ENCODE measurements at regions of chr14 and their contacts with region 1.

Region 1: DNA sequence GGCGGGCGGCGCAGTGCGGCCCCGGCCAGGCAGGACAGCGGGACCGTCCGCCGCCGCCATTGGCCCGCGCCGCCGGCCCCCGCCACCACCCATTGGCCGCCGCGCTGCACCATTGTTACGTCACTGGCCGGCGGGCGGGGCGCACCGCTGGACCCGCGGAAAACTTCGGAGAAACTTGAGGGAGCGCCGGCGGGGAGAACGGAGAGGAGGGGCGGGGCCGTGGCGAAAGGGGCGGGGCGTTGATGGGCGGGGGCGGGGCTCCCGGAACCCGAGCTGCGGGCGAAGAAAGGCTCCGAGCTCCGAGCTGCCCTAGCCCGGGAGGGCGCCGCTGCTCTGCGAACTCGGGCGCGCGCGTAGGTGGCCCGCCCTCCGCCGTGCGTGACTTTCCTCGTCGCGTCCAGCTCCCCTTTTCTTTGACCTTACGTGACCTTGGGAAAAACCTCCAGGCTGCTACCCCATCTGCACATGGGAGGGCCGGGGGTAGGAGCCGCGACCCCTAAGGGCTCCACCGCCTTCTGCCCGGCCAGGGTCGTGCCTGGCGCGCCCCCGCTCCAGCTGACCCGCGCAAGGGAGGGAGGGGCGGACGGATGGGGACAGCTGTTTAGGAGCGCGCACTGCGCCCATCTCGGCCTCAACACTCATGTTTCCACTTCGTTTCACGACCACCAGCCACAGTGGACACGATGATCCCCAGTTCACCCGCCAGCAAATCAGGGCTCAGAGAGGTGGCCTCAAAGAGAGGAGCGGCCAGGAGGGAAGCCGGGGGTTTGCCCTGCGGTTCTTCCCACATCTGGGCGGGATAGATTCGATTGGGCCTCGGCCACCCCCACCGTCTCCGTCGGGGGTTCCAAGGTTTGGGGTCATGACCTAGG is at the start of gene ANKRD9:
- DNase-seq: peak; percentile 95 to 98 (median 96)
- H3K4me3 ChIP-seq: peak within 1 kb of the TSS in 3 of 4 donors; percentile 62 to 74 (median 62)
- H3K27ac ChIP-seq: peak within 1 kb of the TSS; percentile 71 to 91 (median 73)
- H3K4me1 ChIP-seq: peaks cover 4 to 15% of the 10 kb centered on the region in 2 donors
- H3K27me3 ChIP-seq: no peaks in the 10 kb centered on the region
- CTCF ChIP-seq: no peak
- POLR2A ChIP-seq: peak in 1 of 2 donors; percentile 47
- total RNA-seq, gene ANKRD9: 21.4 to 105 (median 46.4) TPM

Region 2: GRCh38 chr14:102319351-102320032 is 190.5 kb before region 1 on chr14 and contains the start of gene ZNF839:
- intact Hi-C with region 1: loop called in 1 of 2 experiments (anchors 10 kb)
- DNase-seq: peak; percentile 93 to 97 (median 95)
- H3K4me3 ChIP-seq: peak within 1 kb of the TSS; percentile 17 to 82 (median 53)
- H3K27ac ChIP-seq: peak within 1 kb of the TSS; percentile 69 to 98 (median 92)
- H3K4me1 ChIP-seq: peaks cover 6 to 42% of the 10 kb centered on the region in 2 donors
- H3K27me3 ChIP-seq: no peaks in the 10 kb centered on the region
- CTCF ChIP-seq: peak in 1 of 6 experiments; percentile 2
- POLR2A ChIP-seq: peak; percentile 20 to 32
- total RNA-seq, gene ZNF839: 7.4 to 23.1 (median 14.1) TPM

Region 3: DNA sequence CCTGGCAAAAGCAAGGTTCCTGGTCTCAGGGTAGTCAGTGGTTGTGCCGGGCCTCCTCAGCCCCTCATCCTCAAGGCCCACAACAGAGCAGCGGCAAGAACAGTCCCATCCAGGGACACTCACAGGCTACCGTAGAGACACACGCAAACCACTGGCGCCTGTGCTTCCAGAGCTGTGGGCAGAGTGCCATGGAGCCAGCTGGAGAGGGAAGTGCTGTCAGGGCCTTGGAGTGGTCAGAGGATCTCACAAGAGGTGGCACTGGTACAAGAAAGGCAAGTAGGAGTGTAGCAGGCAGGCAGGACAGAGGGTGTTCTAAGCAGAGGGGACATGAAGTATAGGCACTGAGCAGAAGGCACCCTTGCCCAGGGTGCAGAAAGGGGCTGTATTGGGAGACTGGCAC is 35.0 kb before region 1 on chr14:
- intact Hi-C with region 1: loop called in 1 of 2 experiments (anchors 5 kb)
- DNase-seq: peak; percentile 75 to 94 (median 89)
- H3K4me3 ChIP-seq: no peak overlapping the region
- H3K27ac ChIP-seq: no peak overlapping the region
- H3K4me1 ChIP-seq: peaks cover 7 to 15% of the 10 kb centered on the region in 2 donors
- H3K27me3 ChIP-seq: no peaks in the 10 kb centered on the region
- CTCF ChIP-seq: no peak
- POLR2A ChIP-seq: no peak

Region 4: GRCh38 chr14:102908806-102909455 is 399.0 kb after region 1 on chr14:
- intact Hi-C with region 1: no loop called
- DNase-seq: no peak
- H3K4me3 ChIP-seq: no peak overlapping the region
- H3K27ac ChIP-seq: no peak overlapping the region
- H3K4me1 ChIP-seq: no peaks in the 10 kb centered on the region
- H3K27me3 ChIP-seq: no peaks in the 10 kb centered on the region
- CTCF ChIP-seq: no peak
- POLR2A ChIP-seq: no peak

Measured in adrenal gland (tissue), 19 donors.